ENCODE measurements at regions of chr19 and their contacts with region 1.

Region 1: DNA sequence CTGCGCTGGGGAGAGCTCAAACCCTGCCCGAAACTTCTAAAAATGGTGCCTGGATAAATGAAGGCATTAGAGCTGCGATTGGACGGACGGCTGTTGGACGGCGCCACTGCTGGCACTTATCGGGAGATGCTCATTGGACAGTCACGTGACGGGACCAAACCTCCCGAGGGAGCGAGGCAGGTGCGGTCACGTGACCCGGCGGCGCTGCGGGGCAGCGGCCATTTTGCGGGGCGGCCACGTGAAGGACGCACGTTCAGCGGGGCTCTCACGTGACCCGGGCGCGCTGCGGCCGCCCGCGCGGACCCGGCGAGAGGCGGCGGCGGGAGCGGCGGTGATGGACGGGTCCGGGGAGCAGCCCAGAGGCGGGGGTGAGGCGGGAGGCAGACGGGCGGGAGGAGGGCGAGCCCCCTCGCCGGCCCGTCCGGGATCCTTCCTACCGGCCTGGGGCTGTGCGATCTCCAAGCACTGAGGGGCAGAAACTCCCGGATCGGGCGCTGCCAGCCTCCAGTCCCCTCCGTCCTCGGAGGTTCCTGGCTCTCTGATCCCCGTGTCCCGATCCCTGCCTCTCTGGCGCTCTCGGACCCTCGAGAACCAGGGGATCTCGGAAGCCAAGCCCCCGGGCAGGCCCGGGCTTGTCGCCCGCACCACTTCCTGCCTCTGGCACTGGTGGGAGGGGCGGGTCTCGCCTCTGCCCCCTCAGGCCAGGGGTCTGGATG is at the start of gene BAX:
- DNase-seq: peak; percentile 61 to 91 (median 81)
- ATAC-seq: peak; percentile 86
- H3K4me3 ChIP-seq: peak within 1 kb of the TSS; percentile 60 to 98
- H3K4me3 Mint-ChIP-seq: peak within 1 kb of the TSS; percentile 91
- H3K27ac ChIP-seq: peak within 1 kb of the TSS; percentile 69 to 93
- H3K27ac Mint-ChIP-seq: peak within 1 kb of the TSS; percentile 85
- H3K4me1 ChIP-seq: peaks cover 19% of the 10 kb centered on the region
- H3K4me1 Mint-ChIP-seq: peaks cover 29% of the 10 kb centered on the region
- H3K27me3 ChIP-seq: no peaks in the 10 kb centered on the region
- H3K27me3 Mint-ChIP-seq: no peaks in the 10 kb centered on the region
- CTCF ChIP-seq: no peak
- total RNA-seq, gene BAX: 55.7 to 57.4 TPM

Region 2: DNA sequence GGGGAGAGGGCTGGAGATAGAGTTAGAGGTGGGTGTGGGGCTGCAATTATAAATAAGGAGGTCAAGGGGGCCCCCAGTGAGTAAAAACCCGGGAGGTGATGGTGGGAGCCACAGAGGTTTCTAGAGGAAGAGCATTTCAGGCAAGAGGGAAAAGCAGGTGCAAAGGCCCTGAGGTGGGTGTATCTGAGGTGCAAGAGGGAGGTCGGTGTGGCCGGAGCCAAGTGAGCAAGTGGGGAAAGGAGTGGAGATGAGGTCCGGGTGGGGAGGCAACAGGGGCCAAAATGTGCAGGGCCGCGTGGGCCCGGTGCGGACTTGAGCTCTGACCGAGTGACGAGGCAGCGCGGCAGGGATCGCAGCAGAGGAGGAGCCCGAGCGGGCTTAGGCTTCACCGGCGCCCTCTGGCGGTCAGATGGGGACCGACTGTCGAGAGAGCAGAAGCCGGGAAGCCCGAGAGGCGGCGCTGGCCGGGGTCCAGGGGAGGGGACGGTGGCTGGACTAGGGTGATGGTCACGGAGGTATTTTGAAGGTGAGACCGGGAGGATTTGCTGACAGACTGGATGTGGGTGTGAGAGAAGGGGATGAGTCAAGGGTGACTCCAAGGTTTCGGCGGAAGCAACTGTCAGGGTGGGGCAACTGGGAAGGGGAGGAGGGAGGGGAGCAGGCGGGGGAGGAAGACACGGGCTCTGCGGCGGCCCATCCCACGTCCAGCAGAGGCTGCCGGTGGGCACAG is 365.9 kb before region 1 on chr19:
- CTCF ChIA-PET with region 1: no interaction called
- POLR2A ChIA-PET with region 1: no interaction called
- intact Hi-C with region 1: no loop called
- DNase-seq: peak; percentile 75 to 92 (median 87)
- ATAC-seq: peak; percentile 89
- H3K4me3 ChIP-seq: peak overlapping the region; percentile 40 to 56
- H3K4me3 Mint-ChIP-seq: peak overlapping the region; percentile 83
- H3K27ac ChIP-seq: peak overlapping the region in 1 of 2 experiments; percentile 54
- H3K27ac Mint-ChIP-seq: peak overlapping the region; percentile 70
- H3K4me1 ChIP-seq: peaks cover 7% of the 10 kb centered on the region
- H3K4me1 Mint-ChIP-seq: peaks cover 22% of the 10 kb centered on the region
- H3K27me3 ChIP-seq: peaks cover 0 to 3% of the 10 kb centered on the region in 2 experiments
- H3K27me3 Mint-ChIP-seq: peaks cover 4% of the 10 kb centered on the region
- CTCF ChIP-seq: peak; percentile 92

Region 3: DNA sequence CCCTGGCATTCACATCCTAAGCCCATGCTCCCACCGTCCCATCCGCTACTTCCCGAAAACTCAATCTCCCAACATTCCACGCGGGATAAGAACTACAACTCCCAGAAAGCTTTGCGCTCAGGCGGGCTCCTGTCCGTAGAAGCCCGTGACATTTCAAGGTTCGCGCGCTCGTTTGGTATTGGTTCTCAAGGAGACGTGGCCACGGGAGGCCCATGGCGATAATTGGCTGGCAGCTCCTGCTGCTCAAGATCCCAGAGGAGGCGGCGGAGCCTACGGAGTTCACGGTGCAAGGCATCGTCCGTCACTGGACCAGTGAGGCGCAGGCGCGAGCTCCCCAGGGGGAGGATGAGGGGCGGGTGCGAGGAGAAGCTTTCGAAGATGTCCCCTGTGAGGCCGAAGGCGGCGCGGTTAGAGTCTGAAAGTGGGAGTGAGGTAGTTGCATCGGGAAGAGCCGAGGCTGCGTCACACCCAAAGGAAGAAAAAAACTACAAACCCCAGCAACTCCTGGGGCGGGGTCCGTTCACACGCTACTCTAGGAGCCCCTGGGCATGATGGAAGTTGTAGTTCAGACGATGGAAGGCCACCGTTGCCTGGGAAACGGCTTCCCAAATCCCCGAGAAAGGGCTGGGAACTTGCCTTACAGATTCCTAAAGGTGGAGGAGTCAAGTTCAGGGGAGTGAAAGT is 234.0 kb before region 1 on chr19:
- CTCF ChIA-PET with region 1: no interaction called
- POLR2A ChIA-PET with region 1: no interaction called
- intact Hi-C with region 1: loop called in 1 of 2 experiments (anchors 1 kb)
- DNase-seq: peak; percentile 81 to 96 (median 90)
- ATAC-seq: peak; percentile 80
- H3K4me3 ChIP-seq: peak overlapping the region; percentile 65 to 69
- H3K4me3 Mint-ChIP-seq: peak overlapping the region; percentile 96
- H3K27ac ChIP-seq: peak overlapping the region; percentile 52 to 88
- H3K27ac Mint-ChIP-seq: peak overlapping the region; percentile 96
- H3K4me1 ChIP-seq: peaks cover 16% of the 10 kb centered on the region
- H3K4me1 Mint-ChIP-seq: peaks cover 24% of the 10 kb centered on the region
- H3K27me3 ChIP-seq: no peaks in the 10 kb centered on the region
- H3K27me3 Mint-ChIP-seq: no peaks in the 10 kb centered on the region
- CTCF ChIP-seq: no peak

Region 4: GRCh38 chr19:48731452-48731851 is 223.3 kb before region 1 on chr19:
- CTCF ChIA-PET with region 1: no interaction called
- POLR2A ChIA-PET with region 1: no interaction called
- intact Hi-C with region 1: no loop called
- DNase-seq: no peak
- ATAC-seq: no peak
- H3K4me3 ChIP-seq: no peak overlapping the region
- H3K4me3 Mint-ChIP-seq: no peak overlapping the region
- H3K27ac ChIP-seq: no peak overlapping the region
- H3K27ac Mint-ChIP-seq: no peak overlapping the region
- H3K4me1 ChIP-seq: peaks cover 5% of the 10 kb centered on the region
- H3K4me1 Mint-ChIP-seq: peaks cover 3% of the 10 kb centered on the region
- H3K27me3 ChIP-seq: no peaks in the 10 kb centered on the region
- H3K27me3 Mint-ChIP-seq: no peaks in the 10 kb centered on the region
- CTCF ChIP-seq: no peak

Region 5: DNA sequence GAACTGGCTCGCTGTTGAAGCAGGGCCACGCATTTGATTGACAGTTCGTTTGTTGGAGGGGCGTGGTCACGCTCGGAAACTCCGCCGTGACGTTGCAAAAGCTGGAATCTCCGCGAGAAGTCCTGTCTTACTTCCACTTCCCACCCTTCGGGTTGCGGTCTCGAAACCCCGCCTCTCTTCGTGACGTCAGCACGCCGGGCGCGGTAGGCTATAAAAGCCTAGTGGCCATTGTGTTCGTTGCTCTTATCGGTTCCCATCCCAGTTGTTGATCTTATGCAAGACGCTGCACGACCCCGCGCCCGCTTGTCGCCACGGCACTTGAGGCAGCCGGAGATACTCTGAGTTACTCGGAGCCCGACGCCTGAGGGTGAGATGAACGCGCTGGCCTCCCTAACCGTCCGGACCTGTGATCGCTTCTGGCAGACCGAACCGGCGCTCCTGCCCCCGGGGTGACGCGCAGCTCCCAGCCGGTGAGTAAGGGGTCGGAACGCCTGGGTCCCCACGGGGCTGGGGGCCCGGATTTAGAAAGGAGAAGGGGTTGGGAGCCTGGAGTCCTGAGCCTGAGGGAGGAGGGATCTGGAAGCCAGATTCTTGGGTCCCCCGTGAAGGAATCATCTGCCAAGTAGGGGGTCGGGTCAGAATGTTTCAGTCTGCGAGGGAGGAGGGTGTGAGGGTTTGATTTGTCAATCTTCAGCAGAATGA is 82.4 kb before region 1 on chr19 and contains the start of gene PPP1R15A:
- CTCF ChIA-PET with region 1: interaction called, 4 read pairs
- POLR2A ChIA-PET with region 1: no interaction called
- intact Hi-C with region 1: loop called in 1 of 2 experiments (anchors 2 kb)
- DNase-seq: peak; percentile 95 to 99 (median 98)
- ATAC-seq: peak; percentile 41
- H3K4me3 ChIP-seq: peak within 1 kb of the TSS; percentile 88 to 90
- H3K4me3 Mint-ChIP-seq: peak within 1 kb of the TSS; percentile 97
- H3K27ac ChIP-seq: peak within 1 kb of the TSS; percentile 98 to 99
- H3K27ac Mint-ChIP-seq: peak within 1 kb of the TSS; percentile 100
- H3K4me1 ChIP-seq: peaks cover 32% of the 10 kb centered on the region
- H3K4me1 Mint-ChIP-seq: peaks cover 34% of the 10 kb centered on the region
- H3K27me3 ChIP-seq: no peaks in the 10 kb centered on the region
- H3K27me3 Mint-ChIP-seq: no peaks in the 10 kb centered on the region
- CTCF ChIP-seq: no peak
- total RNA-seq, gene PPP1R15A: 398 to 399 TPM

Measured in CD8-positive, alpha-beta T cell (primary cell).